Activated naive CD4-positive, alpha-beta T cell treated with anti-CD3 and anti-CD28 coated beads, Interleukin-2, amount 10 ng/mL, durations not matched to agents 7 days and 5 days (primary cell): ENCODE measurements at regions of chr10 and their contacts with region 1.

Region 1: GRCh38 chr10:131885391-131886161 is 15.2 kb upstream of the PPP2R2D start:
- DNase-seq: peak; percentile 86
- H3K4me3 Mint-ChIP-seq: no peak overlapping the region
- H3K27ac Mint-ChIP-seq: no peak overlapping the region
- H3K4me1 Mint-ChIP-seq: peaks cover 7% of the 10 kb centered on the region
- H3K27me3 Mint-ChIP-seq: peaks cover 15% of the 10 kb centered on the region

Region 2: DNA sequence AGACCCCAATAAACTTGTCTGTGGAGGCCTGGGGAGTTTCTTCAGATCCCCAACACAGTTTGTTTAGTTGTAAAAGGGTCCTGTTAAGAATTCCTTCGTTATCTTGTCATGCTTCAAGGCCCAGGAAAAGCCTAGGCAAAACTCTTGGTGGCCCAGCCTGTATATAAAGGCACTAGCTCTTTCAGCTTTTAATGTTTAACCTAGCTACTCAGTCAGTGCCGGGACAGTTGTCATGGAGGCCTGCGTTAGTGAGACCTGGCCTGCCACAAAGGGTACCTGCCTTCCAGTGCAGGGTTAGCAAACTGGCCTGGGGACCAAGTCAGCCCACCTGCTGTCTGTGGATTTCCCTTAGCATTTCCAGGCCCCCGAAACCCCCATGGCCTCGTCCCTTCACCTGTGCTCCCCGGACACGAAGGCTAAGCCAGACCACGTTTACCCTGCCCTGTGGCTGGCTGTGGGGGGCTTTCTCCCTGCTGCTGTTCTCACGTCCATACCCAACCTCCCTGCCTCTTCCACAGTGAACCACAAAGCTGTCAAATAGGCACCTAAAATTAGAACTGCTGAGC is 81.6 kb before region 1 on chr10:
- CTCF ChIA-PET with region 1: no interaction called
- DNase-seq: no peak
- H3K4me3 Mint-ChIP-seq: no peak overlapping the region
- H3K27ac Mint-ChIP-seq: no peak overlapping the region
- H3K4me1 Mint-ChIP-seq: no peaks in the 10 kb centered on the region
- H3K27me3 Mint-ChIP-seq: no peaks in the 10 kb centered on the region

Region 3: GRCh38 chr10:131831561-131831960 is 54.0 kb before region 1 on chr10:
- CTCF ChIA-PET with region 1: no interaction called
- DNase-seq: no peak
- H3K4me3 Mint-ChIP-seq: no peak overlapping the region
- H3K27ac Mint-ChIP-seq: no peak overlapping the region
- H3K4me1 Mint-ChIP-seq: no peaks in the 10 kb centered on the region
- H3K27me3 Mint-ChIP-seq: peaks cover 3% of the 10 kb centered on the region

Region 4: GRCh38 chr10:131896403-131896802 is 10.8 kb after region 1 on chr10:
- CTCF ChIA-PET with region 1: interaction called, 12 read pairs
- DNase-seq: peak; percentile 56
- H3K4me3 Mint-ChIP-seq: no peak overlapping the region
- H3K27ac Mint-ChIP-seq: peak overlapping the region; percentile 1
- H3K4me1 Mint-ChIP-seq: peaks cover 29% of the 10 kb centered on the region
- H3K27me3 Mint-ChIP-seq: peaks cover 45% of the 10 kb centered on the region

Region 5: GRCh38 chr10:131972474-131973071 is 87.0 kb after region 1 on chr10:
- CTCF ChIA-PET with region 1: interaction called, 14 read pairs
- DNase-seq: peak; percentile 75
- H3K4me3 Mint-ChIP-seq: peak overlapping the region; percentile 73
- H3K27ac Mint-ChIP-seq: peak overlapping the region; percentile 98
- H3K4me1 Mint-ChIP-seq: peaks cover 75% of the 10 kb centered on the region
- H3K27me3 Mint-ChIP-seq: no peaks in the 10 kb centered on the region

Region 6: DNA sequence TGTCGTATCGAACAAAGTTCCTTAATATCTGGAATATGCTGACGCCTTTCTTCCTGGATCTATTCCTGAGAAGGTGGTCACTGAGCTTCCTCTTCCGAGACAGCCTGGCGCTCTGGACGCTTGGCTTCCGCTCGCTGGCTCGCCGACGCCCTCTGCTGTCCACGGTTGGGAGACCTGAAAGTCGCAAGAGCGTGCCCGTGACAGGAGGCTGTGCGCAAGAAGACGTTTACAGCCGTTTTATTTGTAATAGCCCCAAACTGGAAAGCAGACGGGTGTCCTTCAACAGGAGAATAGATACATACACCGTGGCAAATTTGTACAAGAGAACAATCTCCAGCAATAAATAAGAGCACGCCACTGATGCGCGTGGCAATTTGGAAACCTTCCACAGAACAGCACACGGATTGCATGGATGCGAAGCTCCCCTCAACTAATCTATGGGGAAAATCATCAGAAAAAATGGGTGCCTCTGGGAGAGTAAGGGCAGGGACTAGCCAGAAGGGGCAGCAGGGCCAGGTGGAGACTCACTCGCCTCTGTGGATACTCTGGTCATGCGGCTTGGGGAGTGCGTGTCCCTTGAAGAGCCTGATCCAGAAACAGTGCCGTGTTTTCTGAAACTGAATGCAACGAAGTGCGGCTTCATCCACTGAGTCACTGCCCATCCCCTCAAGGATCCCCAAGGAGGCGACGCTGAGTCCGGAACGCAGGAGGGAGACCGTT is 137.7 kb after region 1 on chr10:
- CTCF ChIA-PET with region 1: interaction called, 69 read pairs
- DNase-seq: peak; percentile 84
- H3K4me3 Mint-ChIP-seq: no peak overlapping the region
- H3K27ac Mint-ChIP-seq: no peak overlapping the region
- H3K4me1 Mint-ChIP-seq: peaks cover 6% of the 10 kb centered on the region
- H3K27me3 Mint-ChIP-seq: peaks cover 53% of the 10 kb centered on the region